HEK293 (cell line): ENCODE measurements at regions of chr12 and their contacts with region 1.

Region 1: GRCh38 chr12:93109551-93110203 is 180.6 kb upstream of the EEA1 start:
- H3K4me3 ChIP-seq: no peak overlapping the region
- H3K27ac ChIP-seq: no peak overlapping the region
- H3K4me1 ChIP-seq: no peaks in the 10 kb centered on the region; the same call in 1 of the 2 replicates
- CTCF ChIP-seq: no peak

Region 2: GRCh38 chr12:93098077-93098476 is 11.6 kb before region 1 on chr12:
- CTCF ChIA-PET with region 1: interaction called, 16 read pairs
- POLR2A ChIA-PET with region 1: no interaction called
- H3K4me3 ChIP-seq: no peak overlapping the region
- H3K27ac ChIP-seq: no peak overlapping the region
- H3K4me1 ChIP-seq: no peaks in the 10 kb centered on the region
- CTCF ChIP-seq: peak; percentile 31; the same call in 1 of the 2 replicates

Region 3: GRCh38 chr12:93183940-93184671 is 74.4 kb after region 1 on chr12:
- CTCF ChIA-PET with region 1: no interaction called
- POLR2A ChIA-PET with region 1: no interaction called
- H3K4me3 ChIP-seq: no peak overlapping the region
- H3K27ac ChIP-seq: no peak overlapping the region
- H3K4me1 ChIP-seq: no peaks in the 10 kb centered on the region
- CTCF ChIP-seq: no peak

Region 4: GRCh38 chr12:93256256-93256969 is 146.7 kb after region 1 on chr12:
- CTCF ChIA-PET with region 1: no interaction called
- POLR2A ChIA-PET with region 1: no interaction called
- H3K4me3 ChIP-seq: no peak overlapping the region
- H3K27ac ChIP-seq: no peak overlapping the region
- H3K4me1 ChIP-seq: no peaks in the 10 kb centered on the region
- CTCF ChIP-seq: no peak